PC-3 (cell line): ENCODE measurements at regions of chr12 and their contacts with region 1.

Region 1: GRCh38 chr12:26179828-26180227 is 15.5 kb upstream of the SSPN start:
- DNase-seq: no peak
- ATAC-seq: 0 out of 2 replicates have a peak, but pooled peaks have one; percentile 19
- H3K4me3 ChIP-seq: no peak overlapping the region
- H3K27ac ChIP-seq: no peak overlapping the region
- H3K4me1 ChIP-seq: peaks cover 8% of the 10 kb centered on the region; the same call in 1 of the 2 replicates
- H3K27me3 ChIP-seq: no peaks in the 10 kb centered on the region
- CTCF ChIP-seq: no peak

Region 2: DNA sequence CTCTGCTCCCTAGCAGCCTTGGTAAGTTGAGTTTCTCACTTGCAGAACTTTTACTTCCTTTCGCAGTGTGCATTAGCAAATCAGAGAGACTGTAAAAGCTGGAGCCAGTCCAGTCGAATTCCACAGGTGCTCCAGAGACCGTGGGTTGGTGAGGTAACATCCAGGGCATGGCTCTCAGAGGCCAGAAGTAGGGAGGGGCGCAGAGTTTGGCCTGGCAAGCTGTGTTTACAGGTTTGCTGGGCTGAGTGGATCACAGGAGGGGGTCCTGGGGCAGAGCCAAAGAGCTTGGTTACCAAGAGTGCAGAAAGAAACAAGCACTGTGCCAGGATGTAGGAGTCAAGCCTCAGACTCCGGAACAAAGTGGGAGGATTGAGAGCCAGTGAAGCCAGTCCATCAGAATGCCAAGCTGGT is 44.8 kb before region 1 on chr12:
- CTCF ChIA-PET with region 1: no interaction called
- POLR2A ChIA-PET with region 1: no interaction called
- intact Hi-C with region 1: no loop called
- DNase-seq: peak; percentile 31
- ATAC-seq: peak; percentile 31; the same call in 1 of the 2 replicates
- H3K4me3 ChIP-seq: no peak overlapping the region
- H3K27ac ChIP-seq: no peak overlapping the region
- H3K4me1 ChIP-seq: peaks cover 5% of the 10 kb centered on the region
- H3K27me3 ChIP-seq: no peaks in the 10 kb centered on the region
- CTCF ChIP-seq: no peak

Region 3: GRCh38 chr12:26153421-26154154 is 26.2 kb before region 1 on chr12:
- CTCF ChIA-PET with region 1: no interaction called
- POLR2A ChIA-PET with region 1: no interaction called
- intact Hi-C with region 1: loop called (anchors 1 kb)
- DNase-seq: peak; percentile 99
- ATAC-seq: peak; percentile 95
- H3K4me3 ChIP-seq: peak overlapping the region; percentile 22
- H3K27ac ChIP-seq: peak overlapping the region; percentile 88
- H3K4me1 ChIP-seq: peaks cover 37% of the 10 kb centered on the region
- H3K27me3 ChIP-seq: no peaks in the 10 kb centered on the region
- CTCF ChIP-seq: peak; percentile 46